ENCODE measurements at regions of chr4 and their contacts with region 1.

Region 1: DNA sequence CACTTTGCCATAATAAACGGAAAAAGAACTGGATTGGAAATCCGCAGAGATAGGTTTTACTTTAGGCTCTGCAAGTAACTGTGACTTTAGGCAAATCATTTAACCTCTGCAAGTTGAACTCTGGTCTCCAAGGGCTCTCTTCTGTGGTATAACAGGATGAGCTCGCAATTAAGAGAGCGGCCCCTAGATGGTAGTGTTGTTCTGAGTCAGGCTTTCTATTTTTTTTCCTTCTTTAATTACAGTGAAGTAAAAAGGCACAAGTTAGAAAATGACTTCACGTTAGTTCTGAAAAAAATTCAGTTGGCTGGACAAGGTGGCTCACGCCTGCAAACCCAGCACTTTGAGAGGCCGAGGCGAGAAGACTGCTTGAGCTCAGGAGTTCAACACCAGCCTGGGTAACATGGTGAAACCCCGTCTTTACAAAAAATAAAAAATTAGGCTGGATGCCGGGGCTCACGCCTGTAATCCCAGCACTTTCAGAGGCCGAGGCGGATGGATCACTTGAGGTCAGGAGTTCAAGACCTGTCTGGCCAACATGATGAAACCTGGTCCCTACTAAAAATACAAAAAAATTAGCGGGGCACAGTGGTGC is 18.0 kb downstream of the RPS3A start:
- DNase-seq: no peak
- ATAC-seq: peak; percentile 95
- H3K4me3 Mint-ChIP-seq: no peak overlapping the region
- H3K27ac Mint-ChIP-seq: no peak overlapping the region
- H3K4me1 Mint-ChIP-seq: peaks cover 4% of the 10 kb centered on the region
- H3K27me3 Mint-ChIP-seq: no peaks in the 10 kb centered on the region
- CTCF ChIP-seq: no peak

Region 2: GRCh38 chr4:151105454-151106032 is 11.9 kb before region 1 on chr4:
- CTCF ChIA-PET with region 1: interaction called, 3 read pairs
- POLR2A ChIA-PET with region 1: interaction called, 10 read pairs
- intact Hi-C with region 1: no loop called
- DNase-seq: no peak
- ATAC-seq: no peak
- H3K4me3 Mint-ChIP-seq: no peak overlapping the region
- H3K27ac Mint-ChIP-seq: no peak overlapping the region
- H3K4me1 Mint-ChIP-seq: peaks cover 18% of the 10 kb centered on the region
- H3K27me3 Mint-ChIP-seq: no peaks in the 10 kb centered on the region
- CTCF ChIP-seq: no peak

Region 3: DNA sequence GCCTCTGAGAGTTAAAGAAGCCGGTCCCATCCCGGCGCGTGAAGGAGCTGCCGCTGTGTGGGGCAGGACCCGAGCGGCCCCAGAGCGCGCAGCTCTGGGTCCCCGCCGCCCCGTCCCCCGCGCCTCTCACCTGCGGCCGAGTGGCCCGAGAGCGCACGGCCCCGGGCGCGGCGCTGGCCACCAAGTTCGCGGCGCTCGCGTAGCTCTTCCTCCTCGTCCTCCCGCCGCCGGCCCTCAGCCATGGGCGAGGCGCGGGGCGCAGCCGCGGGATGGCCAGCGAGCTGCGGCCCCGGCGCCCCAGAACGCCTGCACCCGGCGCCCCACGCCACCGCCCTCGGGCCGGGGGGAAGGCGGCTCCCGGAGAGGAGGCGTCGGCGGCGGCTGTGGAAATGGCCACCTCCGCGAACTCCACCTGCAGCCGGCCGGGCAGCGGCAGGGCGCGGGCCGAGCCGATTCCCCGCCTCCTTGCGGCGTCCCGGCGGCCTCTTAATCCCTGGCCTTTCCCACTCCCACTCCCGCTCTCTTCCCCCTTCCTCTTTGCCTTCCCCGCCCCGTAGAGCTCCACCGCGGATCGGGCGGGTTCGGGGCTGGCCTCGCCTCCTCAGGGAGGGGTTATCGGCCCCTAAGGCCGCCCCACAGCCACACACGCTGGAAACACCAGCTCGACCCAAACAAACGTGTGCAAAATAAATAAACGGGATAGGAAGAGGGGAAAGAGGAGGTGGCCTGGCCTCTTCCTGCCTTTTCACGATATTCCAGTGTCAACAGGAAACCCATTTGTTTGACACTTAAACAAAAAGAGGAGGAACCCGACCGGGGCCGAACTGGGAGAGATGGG is 207.9 kb after region 1 on chr4 and contains the start of gene SH3D19:
- CTCF ChIA-PET with region 1: no interaction called
- POLR2A ChIA-PET with region 1: no interaction called
- intact Hi-C with region 1: no loop called
- DNase-seq: no peak
- ATAC-seq: no peak
- H3K4me3 Mint-ChIP-seq: no peak within 1 kb of the TSS
- H3K27ac Mint-ChIP-seq: no peak within 1 kb of the TSS
- H3K4me1 Mint-ChIP-seq: peaks cover 9% of the 10 kb centered on the region
- H3K27me3 Mint-ChIP-seq: peaks cover 59% of the 10 kb centered on the region
- CTCF ChIP-seq: no peak
- total RNA-seq, gene SH3D19: not detected in 2 replicates

Region 4: GRCh38 chr4:151362404-151363164 is 245.1 kb after region 1 on chr4:
- CTCF ChIA-PET with region 1: interaction called, 3 read pairs
- POLR2A ChIA-PET with region 1: no interaction called
- intact Hi-C with region 1: loop called (anchors 5 kb)
- DNase-seq: peak; percentile 22
- ATAC-seq: peak; percentile 95
- H3K4me3 Mint-ChIP-seq: no peak overlapping the region
- H3K27ac Mint-ChIP-seq: no peak overlapping the region
- H3K4me1 Mint-ChIP-seq: no peaks in the 10 kb centered on the region
- H3K27me3 Mint-ChIP-seq: peaks cover 7% of the 10 kb centered on the region
- CTCF ChIP-seq: peak; percentile 35

Region 5: DNA sequence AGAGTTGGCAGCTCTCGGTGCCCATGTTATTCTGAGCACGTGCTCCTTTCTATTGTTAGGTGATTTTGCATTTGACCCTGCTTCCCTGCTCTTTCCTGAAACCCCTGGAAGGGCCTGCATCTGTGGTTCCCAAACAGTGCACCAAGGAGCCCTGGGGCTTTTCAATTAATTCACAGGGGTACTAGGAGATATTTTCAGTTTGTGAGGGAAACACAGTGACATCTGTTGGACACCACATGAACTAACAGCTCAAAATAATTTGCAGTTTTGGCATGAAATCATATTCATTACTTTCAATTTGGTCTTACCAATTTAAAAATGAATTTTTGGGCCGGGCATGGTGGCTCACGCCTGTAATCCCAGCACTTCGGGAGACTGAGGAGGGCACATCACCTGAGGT is 486.8 kb after region 1 on chr4:
- CTCF ChIA-PET with region 1: no interaction called
- POLR2A ChIA-PET with region 1: no interaction called
- intact Hi-C with region 1: loop called (anchors 5 kb)
- DNase-seq: no peak
- ATAC-seq: no peak
- H3K4me3 Mint-ChIP-seq: no peak overlapping the region
- H3K27ac Mint-ChIP-seq: no peak overlapping the region
- H3K4me1 Mint-ChIP-seq: no peaks in the 10 kb centered on the region
- H3K27me3 Mint-ChIP-seq: no peaks in the 10 kb centered on the region
- CTCF ChIP-seq: no peak

Region 6: DNA sequence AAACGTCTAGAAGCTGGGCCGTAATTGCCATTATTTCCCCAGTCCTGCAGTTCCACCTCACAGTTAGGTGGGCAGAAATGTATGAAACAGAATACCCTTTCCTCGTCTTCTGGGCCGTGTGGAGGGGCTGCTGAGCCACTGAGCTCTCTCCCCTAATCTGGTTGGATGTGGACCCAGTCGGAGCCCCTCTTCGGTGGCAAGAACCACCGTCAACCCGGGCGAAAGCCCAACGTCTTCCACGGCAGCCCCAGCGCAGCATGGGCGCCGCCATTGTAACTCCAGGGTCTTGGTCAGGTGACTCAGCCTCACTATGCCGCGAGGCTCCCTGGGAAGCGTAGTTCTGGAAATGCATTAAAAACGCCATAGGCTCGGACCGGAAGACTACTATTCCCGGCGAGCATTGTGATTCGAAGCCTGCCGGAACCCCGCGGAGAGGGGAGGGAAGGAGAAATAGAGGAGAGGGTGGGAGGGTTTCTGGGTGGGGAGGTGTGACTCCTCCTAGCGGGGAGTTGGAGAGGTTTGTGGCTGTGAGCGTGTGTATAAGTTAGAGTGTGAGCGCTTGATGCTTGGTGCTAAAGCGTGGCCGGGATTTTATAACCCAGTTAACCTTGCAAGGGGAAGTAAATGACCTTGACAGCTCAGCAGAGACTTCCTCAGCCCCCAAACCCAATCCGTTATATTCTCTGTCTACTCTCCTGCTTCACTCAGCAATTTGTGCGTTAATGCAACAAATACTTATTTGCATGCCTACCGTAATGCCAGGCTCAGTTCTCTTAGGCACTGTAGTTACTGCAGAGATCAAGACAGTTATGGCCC is 643.5 kb after region 1 on chr4 and contains the start of gene GATB:
- CTCF ChIA-PET with region 1: no interaction called
- POLR2A ChIA-PET with region 1: no interaction called
- intact Hi-C with region 1: loop called (anchors 1 kb)
- DNase-seq: peak; percentile 76
- ATAC-seq: peak; percentile 98
- H3K4me3 Mint-ChIP-seq: peak within 1 kb of the TSS; percentile 100
- H3K27ac Mint-ChIP-seq: peak within 1 kb of the TSS; percentile 98
- H3K4me1 Mint-ChIP-seq: peaks cover 13% of the 10 kb centered on the region
- H3K27me3 Mint-ChIP-seq: peaks cover 6% of the 10 kb centered on the region
- CTCF ChIP-seq: no peak
- total RNA-seq, gene GATB: 22.1 and 22.9 TPM in 2 replicates

Measured in activated B cell treated with CpG ODN at 0.5 μM for 24 hours (primary cell).